Activated CD4-positive, alpha-beta T cell treated with anti-CD3 and anti-CD28 coated beads for 36 hours (primary cell): ENCODE measurements at regions of chr15 and their contacts with region 1.

Region 1: GRCh38 chr15:34331809-34332208 is 5.8 kb downstream of the SLC12A6 start:
- DNase-seq: no peak
- ATAC-seq: peak; percentile 62
- H3K4me3 Mint-ChIP-seq: peak overlapping the region; percentile 35
- H3K27ac Mint-ChIP-seq: peak overlapping the region; percentile 94
- H3K4me1 Mint-ChIP-seq: peaks cover 90% of the 10 kb centered on the region
- H3K27me3 Mint-ChIP-seq: no peaks in the 10 kb centered on the region

Region 2: GRCh38 chr15:34055853-34056595 is 275.8 kb before region 1 on chr15:
- CTCF ChIA-PET with region 1: no interaction called
- POLR2A ChIA-PET with region 1: no interaction called
- intact Hi-C with region 1: no loop called
- DNase-seq: no peak
- ATAC-seq: no peak
- H3K4me3 Mint-ChIP-seq: no peak overlapping the region
- H3K27ac Mint-ChIP-seq: no peak overlapping the region
- H3K4me1 Mint-ChIP-seq: peaks cover 3% of the 10 kb centered on the region
- H3K27me3 Mint-ChIP-seq: no peaks in the 10 kb centered on the region

Region 3: GRCh38 chr15:34241372-34242330 is 90.2 kb before region 1 on chr15:
- CTCF ChIA-PET with region 1: interaction called, 26 read pairs
- POLR2A ChIA-PET with region 1: interaction called, 4 read pairs
- intact Hi-C with region 1: loop called (anchors 1 to 2 kb)
- DNase-seq: peak; percentile 35
- ATAC-seq: peak; percentile 68
- H3K4me3 Mint-ChIP-seq: no peak overlapping the region
- H3K27ac Mint-ChIP-seq: peak overlapping the region; percentile 39
- H3K4me1 Mint-ChIP-seq: peaks cover 33% of the 10 kb centered on the region
- H3K27me3 Mint-ChIP-seq: no peaks in the 10 kb centered on the region

Region 4: GRCh38 chr15:34318277-34319079 is 13.3 kb before region 1 on chr15:
- CTCF ChIA-PET with region 1: interaction called, 33 read pairs
- POLR2A ChIA-PET with region 1: interaction called, 5 read pairs
- intact Hi-C with region 1: no loop called
- DNase-seq: peak; percentile 54
- ATAC-seq: peak; percentile 83
- H3K4me3 Mint-ChIP-seq: peak overlapping the region; percentile 81
- H3K27ac Mint-ChIP-seq: peak overlapping the region; percentile 88
- H3K4me1 Mint-ChIP-seq: peaks cover 61% of the 10 kb centered on the region
- H3K27me3 Mint-ChIP-seq: no peaks in the 10 kb centered on the region

Region 5: GRCh38 chr15:34514251-34514670 is 182.5 kb after region 1 on chr15:
- CTCF ChIA-PET with region 1: no interaction called
- POLR2A ChIA-PET with region 1: no interaction called
- intact Hi-C with region 1: no loop called
- DNase-seq: peak; percentile 39
- ATAC-seq: peak; percentile 52
- H3K4me3 Mint-ChIP-seq: peak overlapping the region; percentile 71
- H3K27ac Mint-ChIP-seq: no peak overlapping the region
- H3K4me1 Mint-ChIP-seq: peaks cover 11% of the 10 kb centered on the region
- H3K27me3 Mint-ChIP-seq: peaks cover 51% of the 10 kb centered on the region